Activated naive CD4-positive, alpha-beta T cell treated with anti-CD3 and anti-CD28 coated beads for 36 hours (primary cell): ENCODE measurements at regions of chrX and their contacts with region 1.

Region 1: GRCh38 chrX:386768-387575 is at the start of gene PPP2R3B:
- DNase-seq: peak; percentile 98
- H3K4me3 Mint-ChIP-seq: peak within 1 kb of the TSS; percentile 82
- H3K27ac Mint-ChIP-seq: peak within 1 kb of the TSS; percentile 94
- H3K4me1 Mint-ChIP-seq: peaks cover 12% of the 10 kb centered on the region
- H3K27me3 Mint-ChIP-seq: no peaks in the 10 kb centered on the region
- total RNA-seq, gene PPP2R3B: 33.8 to 37.2 TPM

Region 2: DNA sequence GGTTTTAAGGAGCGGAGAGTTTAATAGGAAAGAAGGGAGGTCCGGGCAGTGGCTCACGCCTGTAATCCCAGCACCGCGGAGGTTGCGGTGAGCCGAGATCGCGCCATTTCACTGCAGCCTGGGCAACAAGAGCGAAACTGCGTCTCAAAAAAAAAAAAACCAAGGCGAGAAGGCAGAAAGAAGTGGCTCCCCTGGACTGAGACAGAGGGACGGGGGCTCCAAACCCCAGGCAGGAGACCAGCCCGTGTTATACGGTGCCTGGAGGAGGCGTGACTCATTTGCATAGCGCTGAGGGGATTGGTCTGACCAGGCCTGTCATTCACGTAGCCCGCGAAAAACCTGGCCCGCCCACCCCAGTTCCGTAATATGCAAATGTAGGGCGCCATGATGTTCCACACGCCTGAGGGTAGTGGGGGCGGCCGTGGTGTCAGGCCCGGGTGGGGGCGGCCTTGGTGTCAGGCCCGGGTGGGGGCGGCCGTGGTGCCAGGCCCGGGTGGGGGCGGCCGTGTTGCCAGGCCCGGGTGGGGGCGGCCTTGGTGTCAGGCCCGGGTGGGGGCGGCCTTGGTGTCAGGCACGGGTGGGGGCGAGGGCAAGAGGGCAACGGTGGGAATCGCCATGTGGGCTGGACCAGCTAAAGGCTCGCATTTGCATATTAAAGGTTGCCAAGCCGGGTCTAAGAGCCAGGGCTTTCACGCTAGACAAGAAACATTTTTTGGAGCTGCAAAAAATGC is 103.7 kb before region 1 on chrX:
- CTCF ChIA-PET with region 1: no interaction called
- intact Hi-C with region 1: loop called (anchors 2 kb)
- DNase-seq: peak; percentile 96
- H3K4me3 Mint-ChIP-seq: peak overlapping the region; percentile 96
- H3K27ac Mint-ChIP-seq: peak overlapping the region; percentile 98
- H3K4me1 Mint-ChIP-seq: peaks cover 34% of the 10 kb centered on the region
- H3K27me3 Mint-ChIP-seq: no peaks in the 10 kb centered on the region

Region 3: DNA sequence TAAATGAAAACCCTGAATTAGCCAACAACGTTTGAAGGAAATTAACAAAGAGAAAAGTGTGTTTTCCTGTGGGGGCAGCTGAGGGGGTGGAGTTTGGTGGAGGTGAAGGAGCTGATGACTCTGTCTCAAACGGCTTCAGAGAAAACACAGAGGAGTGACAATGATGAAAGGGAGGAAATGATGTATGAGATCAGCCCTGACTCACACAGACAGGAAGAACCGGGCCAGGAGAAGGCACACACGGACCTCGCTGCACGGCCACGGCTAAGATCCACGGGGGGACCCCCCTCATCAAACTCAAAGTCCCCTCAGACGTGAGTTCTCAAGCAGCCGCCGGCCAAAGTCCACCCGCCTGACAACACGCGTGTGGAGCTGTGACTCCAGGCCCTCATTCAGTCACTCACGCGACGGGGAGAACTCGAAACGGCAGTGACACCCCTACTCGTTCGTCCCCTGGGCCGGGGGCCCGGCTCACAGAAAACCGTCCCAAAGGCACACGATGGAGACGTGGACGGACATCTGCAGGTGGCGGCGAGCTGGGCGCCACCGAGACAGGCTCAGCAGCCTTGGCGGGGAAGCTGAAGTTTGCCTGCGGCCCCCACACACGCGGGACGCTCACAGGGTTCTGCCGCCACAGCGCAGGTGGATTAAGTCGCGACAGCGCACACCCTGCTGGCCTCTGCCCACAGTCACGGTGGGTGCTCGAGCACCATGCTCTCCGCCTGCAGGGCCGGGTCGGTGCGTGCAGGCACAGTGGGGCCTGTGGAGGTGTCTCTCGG is 29.1 kb before region 1 on chrX:
- CTCF ChIA-PET with region 1: no interaction called
- intact Hi-C with region 1: loop called (anchors 1 kb)
- DNase-seq: peak; percentile 72
- H3K4me3 Mint-ChIP-seq: peak overlapping the region; percentile 65
- H3K27ac Mint-ChIP-seq: peak overlapping the region; percentile 98
- H3K4me1 Mint-ChIP-seq: peaks cover 28% of the 10 kb centered on the region
- H3K27me3 Mint-ChIP-seq: no peaks in the 10 kb centered on the region